Dorsolateral prefrontal cortex (tissue), 120 donors: ENCODE measurements at regions of chr2 and their contacts with region 1.

Region 1: DNA sequence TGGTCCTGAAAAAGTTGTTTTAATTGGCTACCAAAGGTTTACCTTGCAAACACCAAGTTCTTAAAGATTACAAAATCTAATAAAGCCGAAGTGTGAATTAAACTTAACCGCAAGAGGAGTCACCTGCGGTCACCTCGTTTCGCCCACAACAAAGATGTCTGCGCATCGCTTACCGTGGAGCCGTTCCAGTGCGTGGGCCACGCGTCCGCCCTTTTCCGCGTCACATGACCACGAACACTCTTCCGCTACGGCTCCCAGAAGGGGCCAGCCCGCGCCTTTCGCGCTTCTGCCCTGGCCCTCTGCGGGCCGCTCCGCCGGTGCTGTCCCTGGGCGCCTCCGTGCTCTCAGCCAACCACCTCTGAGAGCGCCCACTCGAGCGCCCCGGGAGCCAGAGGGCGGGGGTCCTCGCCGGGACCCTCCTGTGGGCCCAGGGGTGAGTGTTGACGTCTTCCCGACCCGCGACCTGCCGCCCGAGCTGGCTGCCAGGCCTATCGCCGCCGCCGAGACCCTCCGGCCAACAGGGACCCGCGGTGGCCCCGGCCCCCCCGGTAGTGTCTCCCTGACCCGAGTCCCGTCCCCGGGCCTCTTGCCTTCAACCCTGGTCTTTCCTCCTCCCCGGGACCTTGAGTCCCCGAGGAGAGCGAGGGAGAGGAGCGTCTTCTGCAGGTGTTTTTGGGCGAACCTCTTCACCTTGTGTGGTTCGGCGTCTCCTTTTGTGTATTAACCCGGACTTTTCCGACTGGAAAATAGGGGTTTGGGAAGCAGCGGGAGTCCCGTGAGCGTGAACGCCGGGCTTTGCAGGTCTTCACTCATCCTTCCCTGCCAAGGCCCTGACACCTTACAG is at the start of gene MFF:
- DNase-seq: peak; percentile 83 to 95 (median 92)
- H3K4me3 ChIP-seq: peak within 1 kb of the TSS; percentile 70 to 100 (median 97)
- H3K27ac ChIP-seq: peak within 1 kb of the TSS; percentile 27 to 98 (median 93)
- H3K27me3 ChIP-seq: no peaks in the 10 kb centered on the region
- CTCF ChIP-seq: peak in 51 of 56 donors; percentile 1 to 71 (median 40)
- total RNA-seq, gene MFF: 80.8 to 145 (median 108) TPM

Region 2: DNA sequence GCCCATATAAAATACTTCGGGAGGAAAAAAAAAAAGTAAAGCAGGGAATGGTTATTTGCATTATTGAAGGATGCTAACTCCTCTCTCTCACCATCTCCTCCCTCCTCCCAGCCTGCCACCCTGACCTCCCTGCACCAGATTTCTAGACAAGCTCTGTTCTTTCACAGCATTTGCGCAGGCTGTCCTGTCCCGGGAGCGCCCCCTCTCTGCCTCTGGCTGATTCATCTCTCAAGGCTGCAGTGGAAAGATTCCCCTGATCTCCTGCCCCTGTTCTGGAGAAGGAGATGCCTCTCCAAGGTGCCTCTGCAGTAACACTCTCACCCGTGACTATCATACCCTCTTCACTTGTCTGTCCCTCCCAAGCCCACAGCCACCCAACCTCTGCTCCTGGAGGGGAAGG is 199.7 kb before region 1 on chr2:
- intact Hi-C with region 1: loop called in 1 of 2 experiments (anchors 10 kb)
- DNase-seq: no peak
- H3K4me3 ChIP-seq: no peak overlapping the region
- H3K27ac ChIP-seq: no peak overlapping the region
- H3K27me3 ChIP-seq: peaks cover 0 to 23% (median 0%) of the 10 kb centered on the region in 45 donors
- CTCF ChIP-seq: no peak

Region 3: DNA sequence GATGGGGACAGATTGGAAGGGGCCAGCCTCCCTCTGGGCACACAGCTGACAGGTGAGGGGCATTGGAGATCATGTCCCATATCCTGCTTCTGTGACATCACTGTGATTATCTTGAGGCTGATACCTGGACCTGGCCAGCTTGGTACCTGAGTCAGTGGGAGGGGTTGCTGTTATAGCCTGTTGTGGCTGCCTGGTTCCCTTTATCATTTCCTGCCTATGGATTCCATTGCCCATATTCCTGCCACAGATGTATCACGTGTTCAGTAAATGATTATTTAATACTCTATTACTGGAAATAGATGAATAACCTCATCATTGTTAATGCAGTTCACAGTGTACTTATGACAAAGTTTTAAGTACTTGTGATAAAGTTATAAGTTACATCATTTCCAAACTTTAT is 70.3 kb after region 1 on chr2:
- intact Hi-C with region 1: loop called in 1 of 2 experiments (anchors 10 kb)
- DNase-seq: no peak
- H3K4me3 ChIP-seq: no peak overlapping the region
- H3K27ac ChIP-seq: peak overlapping the region in 2 of 59 donors; percentile 9 to 18
- H3K27me3 ChIP-seq: no peaks in the 10 kb centered on the region
- CTCF ChIP-seq: no peak

Region 4: DNA sequence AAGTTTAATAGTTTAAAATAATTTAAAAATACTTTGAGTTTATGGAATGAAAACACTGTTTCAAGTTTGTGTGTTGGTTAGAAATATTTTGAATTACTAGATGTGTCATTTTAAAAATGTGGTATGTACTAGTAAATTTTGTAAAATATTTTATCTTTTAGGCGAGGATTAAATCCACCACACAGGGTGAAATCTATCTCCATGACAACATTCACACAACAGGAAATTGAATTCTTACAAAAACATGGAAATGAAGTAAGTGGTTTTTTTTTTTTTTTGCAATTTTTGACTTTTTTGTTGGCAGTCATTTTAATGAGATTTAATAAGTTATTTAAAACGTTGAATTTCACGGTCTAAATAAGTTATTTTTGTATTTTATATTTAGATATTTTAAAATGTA is 166.2 kb after region 1 on chr2:
- intact Hi-C with region 1: no loop called
- DNase-seq: no peak
- H3K4me3 ChIP-seq: no peak overlapping the region
- H3K27ac ChIP-seq: no peak overlapping the region
- H3K27me3 ChIP-seq: no peaks in the 10 kb centered on the region
- CTCF ChIP-seq: no peak